ENCODE measurements at regions of chr1 and their contacts with region 1.

Region 1: GRCh38 chr1:54391450-54392209 is 14.6 kb downstream of the SSBP3 start:
- DNase-seq: no peak
- ATAC-seq: peak; percentile 18 to 34
- H3K4me3 ChIP-seq: no peak overlapping the region
- H3K27ac ChIP-seq: peak overlapping the region; percentile 79 to 89 (median 84)
- H3K4me1 ChIP-seq: peaks cover 88 to 89% of the 10 kb centered on the region in 2 donors
- H3K27me3 ChIP-seq: no peaks in the 10 kb centered on the region
- CTCF ChIP-seq: no peak
- POLR2A ChIP-seq: no peak

Region 2: DNA sequence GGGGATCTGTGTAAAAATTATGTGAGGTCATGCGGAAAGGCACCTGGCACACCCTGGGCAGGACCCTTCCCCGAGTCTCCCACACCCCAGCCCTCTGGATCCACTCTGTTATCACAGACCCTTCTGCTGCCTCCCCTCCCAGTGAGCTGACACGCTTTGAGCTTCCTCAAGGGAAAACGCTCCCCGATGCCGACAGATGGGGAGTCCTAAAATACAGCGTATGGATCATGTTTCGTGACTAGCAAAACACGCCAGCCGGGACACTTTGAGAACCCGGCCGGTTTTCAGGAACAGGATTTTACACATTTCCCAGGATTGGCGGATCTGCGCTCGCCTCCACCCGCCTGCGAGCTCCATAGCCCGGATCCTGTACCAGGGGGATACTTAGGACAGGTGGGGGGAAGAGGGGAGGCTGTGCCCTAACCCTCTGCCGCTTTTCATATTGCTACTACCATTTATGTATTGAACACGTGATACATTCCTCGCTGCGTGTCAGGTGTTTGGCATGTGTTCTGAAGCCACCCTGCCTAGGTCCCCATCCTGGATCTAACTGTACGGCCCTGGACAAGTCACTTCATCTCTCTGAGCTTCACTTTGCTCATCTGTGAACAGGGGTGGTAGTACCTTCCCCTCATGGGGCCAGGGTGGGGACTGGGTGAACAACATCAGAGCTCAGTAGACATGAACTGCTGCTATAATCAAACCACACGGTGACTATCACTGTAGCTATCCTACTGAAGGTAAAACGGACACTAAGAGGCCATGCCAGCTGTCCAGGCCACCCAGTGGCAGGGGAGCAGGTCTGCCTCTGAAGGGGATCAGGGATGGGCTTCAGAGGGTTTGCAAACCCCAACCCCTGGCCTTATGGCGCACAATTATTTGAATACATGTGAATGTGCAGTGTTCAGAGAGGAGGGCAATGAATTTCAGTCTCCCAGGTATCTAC is 48.6 kb before region 1 on chr1:
- in situ Hi-C with region 1: no loop called
- intact Hi-C with region 1: loop called (anchors 1 kb)
- DNase-seq: peak in 1 of 2 donors; percentile 50
- ATAC-seq: peak; percentile 61 to 66
- H3K4me3 ChIP-seq: peak overlapping the region; percentile 33 to 51 (median 41)
- H3K27ac ChIP-seq: peak overlapping the region; percentile 76 to 85 (median 82)
- H3K4me1 ChIP-seq: peaks cover 55 to 56% of the 10 kb centered on the region in 2 donors
- H3K27me3 ChIP-seq: no peaks in the 10 kb centered on the region
- CTCF ChIP-seq: peak; percentile 32 to 49 (median 34)
- POLR2A ChIP-seq: peak in 1 of 2 donors; percentile 11

Measured in gastrocnemius medialis (tissue), 4 donors.